Ascending aorta (tissue), 2 donors: ENCODE measurements at regions of chr7 and their contacts with region 1.

Region 1: DNA sequence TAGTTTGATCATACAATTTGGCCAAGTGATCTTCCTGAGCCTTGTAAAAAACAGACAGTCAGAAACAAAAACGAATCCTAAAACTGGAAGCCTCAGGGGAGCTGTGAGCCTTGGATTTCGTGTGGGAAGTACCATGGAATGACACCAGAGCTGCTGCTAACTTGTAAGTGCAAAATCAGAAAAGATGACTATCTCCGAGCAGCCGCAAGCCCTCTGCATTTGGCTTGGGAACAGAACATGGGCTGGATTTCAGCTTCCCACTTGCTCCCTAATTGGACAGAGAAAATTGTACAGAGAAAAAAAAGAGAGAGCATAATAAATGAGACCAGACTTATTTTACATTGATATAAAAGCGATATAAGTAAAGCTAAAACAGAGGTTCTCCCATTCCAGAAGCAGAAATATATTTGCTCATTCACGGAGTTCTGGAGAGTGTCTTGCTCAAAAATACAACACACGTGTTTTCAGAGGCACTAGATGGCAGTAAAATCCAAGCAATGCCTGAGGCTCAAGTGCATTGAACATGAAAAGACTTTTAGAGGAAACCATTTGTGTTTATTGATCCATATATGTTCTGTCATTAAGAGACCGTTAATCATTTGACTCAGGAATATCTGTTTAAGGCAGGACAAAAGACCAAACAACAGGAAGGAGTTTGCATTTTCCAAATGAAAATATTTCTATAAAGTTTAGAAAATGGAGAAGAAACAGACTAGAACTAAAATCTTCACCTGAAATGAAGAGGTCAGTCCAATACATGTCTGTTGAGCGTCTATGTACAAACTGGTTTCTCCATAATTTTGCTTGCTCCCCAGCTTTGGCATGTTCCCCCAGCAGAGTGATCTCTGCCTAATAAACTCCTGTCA is 78.3 kb upstream of the SLC26A5 start:
- DNase-seq: no peak
- H3K4me3 ChIP-seq: no peak overlapping the region
- H3K27ac ChIP-seq: no peak overlapping the region
- H3K4me1 ChIP-seq: no peaks in the 10 kb centered on the region
- H3K27me3 ChIP-seq: no peaks in the 10 kb centered on the region
- CTCF ChIP-seq: peak in 2 of 3 experiments; percentile 27 to 54

Region 2: DNA sequence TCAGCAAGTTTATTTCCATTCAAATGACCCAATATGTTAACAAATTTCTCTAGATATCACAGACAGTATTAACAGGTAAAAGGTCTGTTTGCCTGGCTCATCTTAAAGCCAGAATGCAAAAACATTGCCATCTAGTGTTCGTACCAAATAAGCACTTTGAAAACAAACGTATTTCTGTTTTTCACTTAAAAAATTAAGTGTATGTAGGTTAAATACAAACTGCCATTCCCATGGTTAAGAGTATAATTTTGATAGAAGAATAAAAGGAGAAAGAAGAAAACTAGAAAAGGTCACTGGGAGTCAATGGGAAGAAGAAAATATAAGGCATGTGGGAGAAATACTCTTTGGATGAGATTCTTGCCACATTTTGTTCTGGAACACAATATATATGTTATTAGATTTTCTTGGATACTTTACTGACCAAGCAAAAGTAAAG is 632.6 kb after region 1 on chr7:
- intact Hi-C with region 1: loop called (anchors 2 kb)
- DNase-seq: no peak
- H3K4me3 ChIP-seq: no peak overlapping the region
- H3K27ac ChIP-seq: no peak overlapping the region
- H3K4me1 ChIP-seq: no peaks in the 10 kb centered on the region
- H3K27me3 ChIP-seq: no peaks in the 10 kb centered on the region
- CTCF ChIP-seq: peak in 2 of 3 experiments; percentile 3 to 40